ENCODE measurements at regions of chr3 and their contacts with region 1.

Region 1: DNA sequence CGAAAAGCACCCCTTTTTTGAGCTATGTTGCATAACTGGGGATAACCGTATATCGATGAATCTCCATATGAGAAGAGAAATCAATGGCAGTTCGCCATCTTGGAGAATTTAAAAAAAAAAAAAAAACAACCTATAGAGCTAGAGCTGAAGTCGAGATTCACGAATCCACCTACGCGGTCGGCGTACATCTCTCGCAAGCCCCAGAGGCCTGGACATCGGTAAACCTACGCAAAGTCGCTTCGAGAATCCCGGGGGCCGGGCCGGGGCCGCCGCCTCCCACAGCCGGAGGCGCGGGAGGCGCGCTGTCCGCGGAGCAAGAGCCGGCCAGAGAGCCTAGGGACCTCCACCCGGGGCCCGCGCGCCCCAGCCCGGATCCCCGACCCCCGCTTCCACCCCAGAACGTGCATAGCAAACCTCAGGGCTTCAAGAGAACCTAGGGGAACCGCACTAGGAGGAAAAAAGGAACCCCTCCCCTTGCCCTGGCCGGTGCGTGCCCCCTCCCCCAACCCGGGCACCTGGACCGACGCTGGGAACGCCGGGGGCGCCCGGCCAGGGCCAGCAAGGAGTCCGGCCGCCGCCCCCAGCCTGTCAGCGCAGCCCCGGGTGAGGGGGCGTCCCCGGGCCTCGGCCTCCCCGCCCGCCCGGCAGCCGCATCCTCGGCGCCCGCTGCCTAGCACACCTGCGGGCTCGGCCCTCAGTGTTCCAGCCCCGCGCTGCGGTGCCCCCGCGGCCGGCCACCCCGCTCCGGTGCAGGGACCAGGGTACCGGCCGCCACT is 567 bp downstream of the PFN2 start:
- DNase-seq: peak; percentile 88
- ATAC-seq: peak; percentile 82

Region 2: GRCh38 chr3:149990423-149990948 is 20.4 kb after region 1 on chr3:
- intact Hi-C with region 1: no loop called
- DNase-seq: no peak
- ATAC-seq: no peak

Region 3: GRCh38 chr3:150183678-150184425 is 213.7 kb after region 1 on chr3:
- intact Hi-C with region 1: loop called (anchors 5 kb)
- DNase-seq: peak; percentile 80
- ATAC-seq: peak; percentile 97

Region 4: GRCh38 chr3:151838583-151839312 is 1868.6 kb after region 1 on chr3:
- intact Hi-C with region 1: no loop called
- DNase-seq: peak; percentile 61
- ATAC-seq: peak; percentile 91

Measured in sciatic nerve (tissue), 2 donors.